ENCODE measurements at regions of chr11 and their contacts with region 1.

Region 1: GRCh38 chr11:122754553-122755322 is 83.6 kb upstream of the CRTAM start:
- DNase-seq: no peak
- ATAC-seq: peak; percentile 87
- H3K4me3 ChIP-seq: no peak overlapping the region
- H3K27ac ChIP-seq: no peak overlapping the region
- H3K4me1 ChIP-seq: 0 out of 2 replicates have a peak, but pooled peaks cover 3% of the 10 kb centered on the region
- H3K27me3 ChIP-seq: no peaks in the 10 kb centered on the region; a peak in 2 of 4 replicates
- CTCF ChIP-seq: peak; percentile 47 to 66 (median 58); a peak in 5 of 6 replicates
- EP300 ChIP-seq: no peak
- POLR2A ChIP-seq: no peak
- RAD21 ChIP-seq: peak; percentile 74

Region 2: DNA sequence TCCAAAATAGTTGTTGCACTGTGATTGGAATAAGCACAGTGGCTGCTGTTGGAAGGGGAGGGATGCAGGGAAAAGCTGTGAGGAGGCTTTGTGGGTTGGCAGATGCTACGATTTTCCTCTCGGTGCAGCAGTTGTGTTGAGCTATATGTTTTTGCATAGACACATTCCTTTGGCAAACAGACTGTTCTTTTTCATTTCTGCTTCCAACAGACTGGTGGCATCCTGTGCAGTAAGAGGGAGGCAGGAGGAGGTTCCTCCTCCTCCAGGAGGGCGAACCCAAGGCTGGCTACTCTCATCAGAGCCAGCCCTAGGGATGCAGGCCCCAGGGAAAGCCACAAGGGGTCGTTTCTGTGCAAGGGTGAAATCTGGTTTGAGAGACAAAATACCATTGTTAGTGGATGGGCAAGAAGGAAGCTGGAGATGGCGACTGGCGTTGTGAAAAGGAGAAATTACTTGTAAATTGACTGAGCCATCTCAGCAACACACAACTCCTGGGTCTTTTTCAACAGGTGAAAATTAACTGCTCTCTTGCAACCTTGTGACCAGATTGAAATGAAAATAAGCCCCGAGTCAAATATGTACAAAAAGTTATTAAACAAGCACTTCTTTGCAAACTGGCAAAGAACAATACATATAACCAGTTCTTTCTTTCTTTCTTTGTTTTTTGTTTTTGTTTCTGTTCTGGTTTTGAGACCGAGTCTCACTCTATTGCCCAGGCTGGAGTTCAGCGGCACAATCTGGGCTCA is 125.8 kb before region 1 on chr11:
- CTCF ChIA-PET with region 1: interaction called, 45 read pairs
- POLR2A ChIA-PET with region 1: no interaction called
- RAD21 ChIA-PET with region 1: interaction called, 12 read pairs
- SMC1A ChIA-PET with region 1: interaction called, 18 read pairs
- in situ Hi-C with region 1: loop called (anchors 5 kb)
- intact Hi-C with region 1: loop called (anchors 1 kb)
- DNase-seq: no peak
- ATAC-seq: peak; percentile 95
- H3K4me3 ChIP-seq: no peak overlapping the region
- H3K27ac ChIP-seq: no peak overlapping the region
- H3K4me1 ChIP-seq: no peaks in the 10 kb centered on the region
- H3K27me3 ChIP-seq: no peaks in the 10 kb centered on the region; a peak in 2 of 4 replicates
- CTCF ChIP-seq: peak; percentile 76 to 81 (median 80)
- EP300 ChIP-seq: no peak
- POLR2A ChIP-seq: no peak
- RAD21 ChIP-seq: peak; percentile 84

Region 3: GRCh38 chr11:122655527-122656072 is 99.1 kb before region 1 on chr11 and contains the start of gene UBASH3B:
- CTCF ChIA-PET with region 1: interaction called, 13 read pairs
- POLR2A ChIA-PET with region 1: no interaction called
- RAD21 ChIA-PET with region 1: interaction called, 5 read pairs
- SMC1A ChIA-PET with region 1: interaction called, 4 read pairs
- in situ Hi-C with region 1: no loop called
- intact Hi-C with region 1: no loop called
- DNase-seq: no peak
- ATAC-seq: peak; percentile 93
- H3K4me3 ChIP-seq: peak within 1 kb of the TSS; percentile 82
- H3K27ac ChIP-seq: no peak within 1 kb of the TSS
- H3K4me1 ChIP-seq: peaks cover 6% of the 10 kb centered on the region
- H3K27me3 ChIP-seq: peaks cover 6 to 20% of the 10 kb centered on the region in 2 experiments
- CTCF ChIP-seq: no peak
- EP300 ChIP-seq: no peak
- POLR2A ChIP-seq: no peak
- RAD21 ChIP-seq: no peak
- polyA plus RNA-seq, gene UBASH3B: 0.18 TPM

Region 4: GRCh38 chr11:122721964-122722266 is 32.8 kb before region 1 on chr11:
- CTCF ChIA-PET with region 1: interaction called, 12 read pairs
- POLR2A ChIA-PET with region 1: no interaction called
- RAD21 ChIA-PET with region 1: interaction called, 3 read pairs
- SMC1A ChIA-PET with region 1: interaction called, 4 read pairs
- in situ Hi-C with region 1: no loop called
- intact Hi-C with region 1: no loop called
- DNase-seq: no peak
- ATAC-seq: no peak
- H3K4me3 ChIP-seq: no peak overlapping the region
- H3K27ac ChIP-seq: no peak overlapping the region
- H3K4me1 ChIP-seq: peaks cover 20% of the 10 kb centered on the region
- H3K27me3 ChIP-seq: peaks cover 0 to 1% of the 10 kb centered on the region in 2 experiments; a peak in 2 of 4 replicates
- CTCF ChIP-seq: no peak
- EP300 ChIP-seq: no peak
- POLR2A ChIP-seq: no peak
- RAD21 ChIP-seq: no peak

Region 5: GRCh38 chr11:122743949-122744348 is 10.8 kb before region 1 on chr11:
- CTCF ChIA-PET with region 1: interaction called, 12 read pairs
- POLR2A ChIA-PET with region 1: no interaction called
- RAD21 ChIA-PET with region 1: interaction called, 4 read pairs
- SMC1A ChIA-PET with region 1: interaction called, 12 read pairs
- in situ Hi-C with region 1: no loop called
- intact Hi-C with region 1: no loop called
- DNase-seq: peak; percentile 55
- ATAC-seq: peak; percentile 40
- H3K4me3 ChIP-seq: no peak overlapping the region
- H3K27ac ChIP-seq: peak overlapping the region; percentile 25; the same call in 1 of the 2 replicates
- H3K4me1 ChIP-seq: peaks cover 35% of the 10 kb centered on the region
- H3K27me3 ChIP-seq: peaks cover 0 to 2% of the 10 kb centered on the region in 2 experiments; a peak in 1 of 4 replicates
- CTCF ChIP-seq: no peak
- EP300 ChIP-seq: no peak; a peak in 1 of 4 replicates
- POLR2A ChIP-seq: peak; percentile 65; the same call in 1 of the 2 replicates
- RAD21 ChIP-seq: no peak

Measured in GM12878 (cell line).